Caco-2 (cell line): ENCODE measurements at regions of chr1 and their contacts with region 1.

Region 1: GRCh38 chr1:19010995-19011844 is 54.7 kb upstream of the IFFO2 start:
- DNase-seq: peak; percentile 83 to 90
- H3K4me3 ChIP-seq: no peak overlapping the region; the same call in 1 of the 2 replicates
- H3K4me3 Mint-ChIP-seq: peak overlapping the region; percentile 69
- H3K27ac Mint-ChIP-seq: peak overlapping the region; percentile 93
- H3K4me1 ChIP-seq: peaks cover 79% of the 10 kb centered on the region
- H3K4me1 Mint-ChIP-seq: peaks cover 37% of the 10 kb centered on the region
- H3K27me3 ChIP-seq: no peaks in the 10 kb centered on the region
- H3K27me3 Mint-ChIP-seq: no peaks in the 10 kb centered on the region
- CTCF ChIP-seq: no peak

Region 2: DNA sequence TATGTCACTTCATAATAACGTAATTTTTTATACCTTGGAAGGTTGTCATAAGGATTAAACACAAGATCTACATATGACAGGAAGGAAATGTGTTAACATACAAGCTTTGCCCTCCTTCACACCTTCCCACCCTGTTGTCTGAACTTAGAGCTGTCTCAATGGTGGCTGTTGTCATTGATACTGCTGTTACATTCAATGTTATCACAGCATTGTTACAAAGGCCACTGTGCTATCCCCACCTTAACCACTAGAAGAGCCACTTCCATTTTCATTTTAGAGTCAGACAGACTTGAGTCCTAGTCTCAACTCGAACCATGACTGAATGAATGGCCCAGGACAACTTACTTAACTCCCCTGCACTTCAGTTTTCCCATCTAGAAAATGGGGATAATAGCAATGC is 183.0 kb before region 1 on chr1:
- CTCF ChIA-PET with region 1: no interaction called
- POLR2A ChIA-PET with region 1: no interaction called
- intact Hi-C with region 1: no loop called
- DNase-seq: no peak
- H3K4me3 ChIP-seq: no peak overlapping the region
- H3K4me3 Mint-ChIP-seq: no peak overlapping the region
- H3K27ac Mint-ChIP-seq: no peak overlapping the region
- H3K4me1 ChIP-seq: no peaks in the 10 kb centered on the region
- H3K4me1 Mint-ChIP-seq: no peaks in the 10 kb centered on the region
- H3K27me3 ChIP-seq: no peaks in the 10 kb centered on the region; the same call in 1 of the 2 replicates
- H3K27me3 Mint-ChIP-seq: peaks cover 8% of the 10 kb centered on the region
- CTCF ChIP-seq: no peak

Region 3: DNA sequence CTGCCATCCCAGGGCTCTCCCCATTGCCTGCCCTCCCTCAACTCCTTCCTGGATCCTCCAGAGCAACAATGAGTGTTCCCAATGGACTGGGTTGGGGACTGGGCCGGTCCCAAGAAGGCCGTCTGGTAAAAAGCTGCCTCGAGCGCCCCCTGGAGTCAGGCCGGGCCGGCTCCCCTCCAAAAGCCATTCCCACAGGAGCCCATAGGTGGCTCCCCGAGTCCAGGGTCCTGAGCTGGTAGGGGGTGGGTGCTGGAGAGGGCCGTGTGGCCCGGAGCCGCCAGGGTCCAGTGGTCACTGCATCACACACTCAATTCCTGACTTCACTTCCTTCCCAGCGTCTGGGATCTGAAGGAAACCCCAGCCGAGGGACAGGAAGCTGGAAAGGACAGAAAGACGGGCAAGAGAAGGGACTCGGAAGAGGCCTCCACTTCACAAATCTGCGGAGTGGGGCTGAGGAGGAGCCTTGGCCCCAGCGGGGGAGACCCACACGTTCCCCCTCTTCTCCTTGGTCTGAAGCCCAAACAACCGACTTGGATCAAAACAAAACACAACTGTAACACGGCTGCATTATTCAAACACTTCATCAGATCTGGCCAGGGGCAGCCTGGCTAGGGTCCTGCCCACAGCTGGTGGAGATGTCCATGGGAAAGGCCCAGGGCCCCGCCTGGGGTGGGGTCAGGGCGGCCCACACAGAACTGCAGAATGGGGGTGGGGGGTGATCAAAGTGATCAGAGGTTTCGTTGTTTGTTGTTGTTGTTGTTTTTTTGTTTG is 98.0 kb before region 1 on chr1:
- CTCF ChIA-PET with region 1: interaction called, 3 read pairs
- POLR2A ChIA-PET with region 1: no interaction called
- intact Hi-C with region 1: loop called (anchors 5 kb)
- DNase-seq: peak; percentile 66 to 79
- H3K4me3 ChIP-seq: no peak overlapping the region
- H3K4me3 Mint-ChIP-seq: no peak overlapping the region
- H3K27ac Mint-ChIP-seq: no peak overlapping the region
- H3K4me1 ChIP-seq: no peaks in the 10 kb centered on the region
- H3K4me1 Mint-ChIP-seq: peaks cover 7% of the 10 kb centered on the region
- H3K27me3 ChIP-seq: no peaks in the 10 kb centered on the region
- H3K27me3 Mint-ChIP-seq: no peaks in the 10 kb centered on the region
- CTCF ChIP-seq: peak; percentile 75 to 89

Region 4: DNA sequence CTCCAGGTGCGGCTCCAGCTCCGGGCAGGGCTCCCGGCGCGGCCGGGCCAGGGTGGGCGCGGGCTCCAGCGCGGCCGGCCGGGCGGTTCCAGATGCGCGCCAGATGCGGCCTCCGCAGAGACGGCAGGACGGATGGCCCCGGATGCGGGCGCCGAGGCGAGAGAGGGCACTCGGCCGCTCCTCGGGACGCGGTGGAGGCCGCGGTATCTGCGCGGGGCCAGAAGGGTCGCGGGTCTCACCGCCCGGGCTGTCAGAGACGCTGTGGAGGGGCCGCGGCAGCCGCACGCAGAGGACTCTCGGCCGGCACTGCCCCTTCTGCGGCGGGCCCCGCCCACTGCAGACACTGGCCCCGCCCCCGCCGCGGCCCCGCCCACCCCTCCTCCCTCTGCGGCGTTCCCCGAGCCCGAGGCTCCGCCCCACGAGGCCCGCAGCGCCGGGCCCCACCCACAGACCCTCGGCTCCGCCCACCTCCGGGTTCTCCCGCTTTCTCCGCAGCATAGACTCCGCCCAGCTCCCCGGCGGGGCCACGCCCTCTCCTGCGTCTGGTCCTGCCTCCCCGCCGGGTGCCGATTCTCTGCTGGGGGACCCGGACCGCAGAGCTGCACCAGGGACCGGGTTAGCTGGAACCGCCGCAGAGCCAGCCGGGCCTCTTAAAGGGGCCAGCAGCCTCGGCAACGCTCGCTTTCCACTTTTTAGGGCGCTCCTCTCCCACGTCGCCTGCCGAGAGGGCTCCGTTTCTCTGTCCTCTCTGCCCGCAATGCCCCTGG is 54.7 kb before region 1 on chr1 and contains the start of gene IFFO2:
- CTCF ChIA-PET with region 1: no interaction called
- POLR2A ChIA-PET with region 1: no interaction called
- intact Hi-C with region 1: loop called (anchors 2 kb)
- DNase-seq: peak; percentile 93 to 96
- H3K4me3 ChIP-seq: peak within 1 kb of the TSS; percentile 90
- H3K4me3 Mint-ChIP-seq: peak within 1 kb of the TSS; percentile 79
- H3K27ac Mint-ChIP-seq: no peak within 1 kb of the TSS
- H3K4me1 ChIP-seq: 0 out of 2 replicates have a peak, but pooled peaks cover 9% of the 10 kb centered on the region
- H3K4me1 Mint-ChIP-seq: peaks cover 5% of the 10 kb centered on the region
- H3K27me3 ChIP-seq: no peaks in the 10 kb centered on the region
- H3K27me3 Mint-ChIP-seq: no peaks in the 10 kb centered on the region
- CTCF ChIP-seq: no peak
- total RNA-seq, gene IFFO2: 18.7 and 23.7 TPM in 2 replicates

Region 5: GRCh38 chr1:18965206-18966173 is 45.7 kb before region 1 on chr1:
- CTCF ChIA-PET with region 1: interaction called, 3 read pairs
- POLR2A ChIA-PET with region 1: interaction called, 11 read pairs
- intact Hi-C with region 1: no loop called
- DNase-seq: peak; percentile 59 to 69
- H3K4me3 ChIP-seq: no peak overlapping the region
- H3K4me3 Mint-ChIP-seq: peak overlapping the region; percentile 38
- H3K27ac Mint-ChIP-seq: peak overlapping the region; percentile 77
- H3K4me1 ChIP-seq: peaks cover 11% of the 10 kb centered on the region
- H3K4me1 Mint-ChIP-seq: peaks cover 12% of the 10 kb centered on the region
- H3K27me3 ChIP-seq: no peaks in the 10 kb centered on the region
- H3K27me3 Mint-ChIP-seq: no peaks in the 10 kb centered on the region
- CTCF ChIP-seq: no peak

Region 6: GRCh38 chr1:19053486-19053885 is 42.3 kb after region 1 on chr1:
- CTCF ChIA-PET with region 1: no interaction called
- POLR2A ChIA-PET with region 1: interaction called, 11 read pairs
- intact Hi-C with region 1: loop called (anchors 2 kb)
- DNase-seq: no peak
- H3K4me3 ChIP-seq: no peak overlapping the region
- H3K4me3 Mint-ChIP-seq: no peak overlapping the region
- H3K27ac Mint-ChIP-seq: peak overlapping the region; percentile 83
- H3K4me1 ChIP-seq: peaks cover 35% of the 10 kb centered on the region
- H3K4me1 Mint-ChIP-seq: peaks cover 6% of the 10 kb centered on the region
- H3K27me3 ChIP-seq: no peaks in the 10 kb centered on the region
- H3K27me3 Mint-ChIP-seq: no peaks in the 10 kb centered on the region
- CTCF ChIP-seq: no peak

Region 7: DNA sequence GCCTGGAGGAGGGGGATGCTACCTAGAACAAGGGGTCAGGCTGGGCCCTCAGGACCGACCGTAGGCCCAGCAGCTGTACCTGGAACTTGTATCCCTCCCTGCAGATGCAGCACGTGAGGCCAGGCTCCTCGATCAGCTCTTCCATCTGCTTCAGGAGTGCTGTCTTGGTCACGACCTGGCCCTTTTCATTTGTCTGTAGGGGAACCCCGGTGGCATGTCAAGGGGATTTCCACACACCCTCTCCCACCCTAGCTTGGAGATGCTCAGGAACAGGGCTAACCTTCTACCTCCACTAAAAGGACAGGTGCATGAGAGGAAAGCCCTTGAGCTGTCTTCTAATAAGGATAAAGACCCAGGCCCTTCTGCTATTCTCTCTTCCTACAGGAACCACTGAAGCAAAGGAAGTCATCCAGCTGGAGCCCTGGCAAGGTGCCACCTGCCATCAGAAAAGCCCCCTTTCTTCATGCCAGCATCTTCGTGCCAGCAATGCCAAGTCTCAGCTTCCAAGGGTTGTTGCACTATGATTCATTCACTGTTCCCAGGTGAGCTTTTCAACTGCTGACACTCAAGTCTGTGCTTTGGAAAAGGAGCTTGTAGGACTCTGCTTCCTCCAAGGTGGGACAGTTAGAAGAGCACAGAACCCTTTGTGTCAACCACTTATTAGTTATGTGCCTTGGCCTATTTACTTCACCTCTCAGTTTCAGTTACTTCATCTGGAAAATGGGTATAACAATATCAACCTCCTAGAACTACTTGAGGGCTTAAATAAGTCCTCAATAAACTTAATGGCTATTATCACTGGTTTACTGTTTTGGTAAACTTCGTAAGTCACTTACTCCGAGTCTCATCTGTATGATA is 76.7 kb after region 1 on chr1:
- CTCF ChIA-PET with region 1: interaction called, 4 read pairs
- POLR2A ChIA-PET with region 1: interaction called, 6 read pairs
- intact Hi-C with region 1: loop called (anchors 5 kb)
- DNase-seq: no peak
- H3K4me3 ChIP-seq: no peak overlapping the region
- H3K4me3 Mint-ChIP-seq: no peak overlapping the region
- H3K27ac Mint-ChIP-seq: peak overlapping the region; percentile 63
- H3K4me1 ChIP-seq: peaks cover 26% of the 10 kb centered on the region
- H3K4me1 Mint-ChIP-seq: peaks cover 29% of the 10 kb centered on the region
- H3K27me3 ChIP-seq: no peaks in the 10 kb centered on the region
- H3K27me3 Mint-ChIP-seq: no peaks in the 10 kb centered on the region
- CTCF ChIP-seq: no peak